GM23248 (cell line): ENCODE measurements at regions of chr16 and their contacts with region 1.

Region 1: DNA sequence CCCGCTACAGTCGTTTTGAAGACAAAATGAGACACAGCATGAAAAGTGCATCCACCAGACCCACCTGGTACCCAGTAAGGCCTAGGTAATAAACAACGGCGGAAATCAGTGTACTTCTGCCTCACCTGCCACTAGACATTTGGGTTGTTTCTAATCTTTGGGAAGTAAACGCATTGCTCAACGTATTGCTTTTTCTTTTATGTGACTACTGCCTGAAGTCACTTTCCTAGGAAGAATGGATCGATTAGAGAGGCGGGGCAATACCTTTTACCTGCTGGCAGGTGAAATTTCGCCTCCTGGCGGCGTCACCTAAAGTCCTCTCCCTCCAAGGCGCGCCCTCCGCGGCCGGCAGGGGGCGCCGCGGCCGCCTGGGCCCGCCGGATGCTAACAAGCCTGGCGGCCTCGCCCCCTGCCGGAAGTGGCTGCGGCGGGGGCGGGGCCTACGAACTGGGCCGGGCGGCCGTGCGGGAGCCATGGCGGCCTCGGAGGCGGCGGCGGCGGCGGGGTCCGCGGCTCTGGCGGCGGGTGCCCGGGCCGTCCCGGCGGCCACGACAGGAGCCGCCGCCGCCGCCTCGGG is at the start of gene ATMIN:
- DNase-seq: peak; percentile 96
- H3K4me3 ChIP-seq: peak within 1 kb of the TSS; percentile 78
- H3K27ac ChIP-seq: peak within 1 kb of the TSS; percentile 54
- H3K4me1 ChIP-seq: peaks cover 10% of the 10 kb centered on the region; the same call in 1 of the 2 replicates
- H3K27me3 ChIP-seq: no peaks in the 10 kb centered on the region
- total RNA-seq, gene ATMIN: 41.7 and 44.4 TPM in 2 replicates

Region 2: GRCh38 chr16:80914379-80915078 is 121.0 kb before region 1 on chr16:
- in situ Hi-C with region 1: no loop called
- DNase-seq: no peak
- H3K4me3 ChIP-seq: no peak overlapping the region
- H3K27ac ChIP-seq: no peak overlapping the region
- H3K4me1 ChIP-seq: no peaks in the 10 kb centered on the region
- H3K27me3 ChIP-seq: no peaks in the 10 kb centered on the region

Region 3: GRCh38 chr16:81737885-81738786 is 702.6 kb after region 1 on chr16:
- in situ Hi-C with region 1: loop called (anchors 25 kb)
- DNase-seq: peak; percentile 78
- H3K4me3 ChIP-seq: peak overlapping the region; percentile 68
- H3K27ac ChIP-seq: no peak overlapping the region
- H3K4me1 ChIP-seq: no peaks in the 10 kb centered on the region
- H3K27me3 ChIP-seq: no peaks in the 10 kb centered on the region